ENCODE measurements at regions of chr2 and their contacts with region 1.

Region 1: GRCh38 chr2:113872201-113872600 is 17.7 kb upstream of the ACTR3 start:
- DNase-seq: no peak
- H3K4me3 ChIP-seq: no peak overlapping the region
- H3K27ac ChIP-seq: no peak overlapping the region
- H3K4me1 ChIP-seq: no peaks in the 10 kb centered on the region
- H3K27me3 ChIP-seq: no peaks in the 10 kb centered on the region
- CTCF ChIP-seq: no peak
- EP300 ChIP-seq: no peak
- POLR2A ChIP-seq: no peak

Region 2: GRCh38 chr2:112891385-112891831 is 980.8 kb before region 1 on chr2:
- intact Hi-C with region 1: no loop called
- DNase-seq: no peak
- H3K4me3 ChIP-seq: no peak overlapping the region
- H3K27ac ChIP-seq: no peak overlapping the region
- H3K4me1 ChIP-seq: no peaks in the 10 kb centered on the region
- H3K27me3 ChIP-seq: no peaks in the 10 kb centered on the region
- CTCF ChIP-seq: no peak
- EP300 ChIP-seq: no peak
- POLR2A ChIP-seq: no peak

Region 3: DNA sequence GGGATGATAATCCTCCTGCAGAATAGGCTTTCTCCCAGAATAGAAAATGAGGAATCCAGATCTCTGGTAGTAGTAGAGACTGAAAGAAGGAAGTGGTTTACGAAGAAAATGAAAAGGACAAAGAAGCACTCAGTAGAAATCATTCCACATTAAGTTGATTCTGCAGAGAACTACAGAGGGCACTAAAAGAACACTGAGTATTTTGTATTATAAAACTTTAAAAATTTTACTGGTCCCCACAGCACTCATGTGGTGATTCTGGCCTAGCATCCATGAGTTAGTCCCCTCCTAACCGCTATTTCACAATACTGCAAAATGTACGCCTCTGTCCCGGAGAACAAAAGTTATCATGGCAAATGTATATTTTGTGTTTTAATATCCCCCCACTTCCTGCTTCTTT is 72.8 kb before region 1 on chr2:
- intact Hi-C with region 1: no loop called
- DNase-seq: no peak
- H3K4me3 ChIP-seq: no peak overlapping the region
- H3K27ac ChIP-seq: no peak overlapping the region
- H3K4me1 ChIP-seq: no peaks in the 10 kb centered on the region
- H3K27me3 ChIP-seq: no peaks in the 10 kb centered on the region
- CTCF ChIP-seq: no peak
- EP300 ChIP-seq: no peak
- POLR2A ChIP-seq: no peak

Region 4: GRCh38 chr2:113940891-113941290 is 68.7 kb after region 1 on chr2:
- intact Hi-C with region 1: loop called (anchors 2 kb)
- DNase-seq: no peak
- H3K4me3 ChIP-seq: no peak overlapping the region
- H3K27ac ChIP-seq: no peak overlapping the region
- H3K4me1 ChIP-seq: no peaks in the 10 kb centered on the region
- H3K27me3 ChIP-seq: no peaks in the 10 kb centered on the region
- CTCF ChIP-seq: no peak
- EP300 ChIP-seq: no peak
- POLR2A ChIP-seq: no peak